Prostate gland (tissue), 2 donors: ENCODE measurements at regions of chr14 and their contacts with region 1.

Region 1: GRCh38 chr14:61461808-61462275 is 140.5 kb downstream of the PRKCH start:
- DNase-seq: peak; percentile 71
- H3K4me3 ChIP-seq: no peak overlapping the region
- H3K27ac ChIP-seq: peak overlapping the region in 1 of 2 donors; percentile 28
- H3K4me1 ChIP-seq: peaks cover 4% of the 10 kb centered on the region
- H3K27me3 ChIP-seq: no peaks in the 10 kb centered on the region
- CTCF ChIP-seq: peak; percentile 85 to 94 (median 87)
- POLR2A ChIP-seq: no peak

Region 2: GRCh38 chr14:61726778-61727658 is 265.2 kb after region 1 on chr14:
- intact Hi-C with region 1: loop called (anchors 5 kb)
- DNase-seq: no peak
- H3K4me3 ChIP-seq: no peak overlapping the region
- H3K27ac ChIP-seq: no peak overlapping the region
- H3K4me1 ChIP-seq: no peaks in the 10 kb centered on the region
- H3K27me3 ChIP-seq: no peaks in the 10 kb centered on the region
- CTCF ChIP-seq: no peak
- POLR2A ChIP-seq: no peak

Region 3: DNA sequence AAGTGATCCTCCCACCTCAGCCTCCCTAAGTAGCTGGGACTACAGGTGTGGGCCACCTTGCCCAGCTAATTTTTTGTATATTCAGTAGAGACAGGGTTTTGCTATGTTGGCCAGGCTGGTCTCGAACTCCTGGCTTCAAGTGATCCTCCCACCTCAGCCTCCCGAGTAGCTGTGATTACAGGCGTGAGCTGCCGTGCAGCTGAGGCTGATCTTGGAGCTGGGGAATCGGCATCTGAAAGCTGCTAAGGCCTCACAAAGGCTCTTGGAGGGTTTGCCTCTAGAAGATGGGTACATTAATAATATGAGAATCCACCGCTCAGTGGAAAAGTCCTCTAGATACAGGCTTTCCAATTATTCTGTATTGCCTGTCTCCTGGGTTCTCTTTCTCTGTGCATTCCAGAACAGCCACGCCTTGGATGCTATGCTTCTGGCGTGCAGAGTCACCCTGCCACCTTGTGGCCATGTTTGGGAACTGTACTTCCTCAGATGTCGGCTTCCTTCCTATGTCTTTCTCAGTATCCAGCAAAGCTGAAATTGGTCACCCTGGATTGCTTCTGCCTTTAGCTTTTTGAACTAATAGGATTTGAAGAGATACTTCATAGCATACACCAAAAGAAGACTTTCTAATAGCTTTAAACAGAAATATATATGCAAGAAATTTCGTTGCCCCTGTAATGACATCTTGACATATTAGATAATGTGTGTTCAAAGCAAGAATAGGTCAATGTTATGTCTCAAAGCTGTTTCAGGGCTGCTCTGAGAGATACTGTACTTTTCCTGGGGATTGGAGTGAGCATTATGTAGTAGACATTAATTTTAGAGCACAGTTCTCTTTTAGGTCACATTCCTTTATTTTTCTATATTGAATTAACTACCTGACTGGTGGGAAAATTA is 375.7 kb after region 1 on chr14:
- intact Hi-C with region 1: loop called (anchors 1 kb)
- DNase-seq: peak; percentile 82
- H3K4me3 ChIP-seq: no peak overlapping the region
- H3K27ac ChIP-seq: no peak overlapping the region
- H3K4me1 ChIP-seq: no peaks in the 10 kb centered on the region
- H3K27me3 ChIP-seq: no peaks in the 10 kb centered on the region
- CTCF ChIP-seq: peak; percentile 81 to 93 (median 92)
- POLR2A ChIP-seq: no peak